Sigmoid colon (tissue), 7 donors: ENCODE measurements at regions of chr7 and their contacts with region 1.

Region 1: DNA sequence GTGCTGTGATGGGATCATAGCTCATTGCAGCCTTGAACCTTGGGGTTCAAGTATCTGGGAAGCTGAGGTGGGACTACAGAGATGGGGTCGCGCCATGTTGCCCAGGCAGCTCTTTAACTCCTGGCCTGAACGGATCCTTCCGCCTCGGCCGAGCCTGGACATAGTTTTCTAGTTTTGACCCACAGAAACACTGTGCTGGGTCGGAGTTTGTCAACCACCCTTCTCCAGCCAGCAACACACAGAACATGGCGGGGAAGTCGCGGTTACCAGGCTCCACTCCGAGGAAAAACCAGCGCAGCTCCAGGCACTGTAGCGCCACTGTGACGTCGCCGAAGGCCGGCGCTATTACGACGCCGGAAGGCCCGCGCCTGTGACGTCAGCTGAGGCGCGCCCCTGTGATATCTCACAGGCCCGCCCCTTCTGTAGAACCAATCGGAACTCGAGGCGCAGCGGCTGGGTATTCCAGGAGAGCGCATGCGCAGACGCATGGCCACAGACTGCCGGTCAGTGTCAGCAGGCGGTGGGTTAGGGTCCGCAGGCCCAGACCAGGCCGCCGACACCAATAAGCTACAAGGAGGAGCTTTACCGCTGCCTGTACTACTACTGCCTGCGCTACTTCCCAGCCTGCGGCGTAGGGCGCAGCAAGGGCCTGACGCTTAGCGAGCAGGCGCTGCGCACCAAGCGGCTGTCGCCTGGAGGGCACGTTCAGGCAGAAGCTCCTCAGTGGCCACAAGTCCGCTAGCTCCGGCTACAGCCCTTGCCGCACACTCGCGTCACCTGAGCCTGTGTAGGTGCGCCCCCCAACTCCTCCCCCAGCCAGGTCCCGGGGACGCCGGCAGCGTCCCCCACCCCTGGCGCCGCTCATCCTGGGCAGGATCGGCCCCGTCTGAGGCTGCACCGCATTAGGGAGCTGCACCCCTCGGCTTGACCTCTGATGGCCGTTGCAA is 135.2 kb upstream of the KCTD7 start:
- DNase-seq: peak; percentile 99
- H3K4me3 ChIP-seq: peak overlapping the region; percentile 62 to 78 (median 76)
- H3K27ac ChIP-seq: peak overlapping the region; percentile 82 to 96 (median 91)
- H3K4me1 ChIP-seq: peaks cover 0 to 17% (median 15%) of the 10 kb centered on the region in 4 donors
- H3K27me3 ChIP-seq: no peaks in the 10 kb centered on the region
- CTCF ChIP-seq: peak in 3 of 4 experiments; percentile 34 to 47 (median 40)
- EP300 ChIP-seq: peak in 1 of 4 donors; percentile 34
- POLR2A ChIP-seq: peak; percentile 92

Region 2: DNA sequence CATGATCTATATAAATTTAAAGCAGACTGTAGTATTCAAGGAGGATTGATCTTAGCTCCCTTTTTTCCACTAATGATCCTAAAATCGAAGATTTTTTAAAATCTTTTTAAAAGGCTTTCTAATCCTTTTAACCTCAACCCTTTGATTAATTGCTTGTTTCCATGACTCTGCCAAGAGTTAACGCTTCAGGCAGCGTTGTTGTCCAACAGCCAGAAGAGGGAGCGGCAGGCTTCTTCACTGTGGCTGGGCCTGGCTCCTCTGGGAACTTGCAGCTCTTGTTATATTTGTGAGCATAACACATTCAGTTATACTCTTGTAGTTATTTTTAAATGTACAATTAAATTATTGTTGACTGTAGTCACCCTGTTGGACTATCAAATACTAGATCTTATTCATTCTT is 352.6 kb before region 1 on chr7:
- intact Hi-C with region 1: loop called (anchors 5 kb)
- DNase-seq: peak; percentile 92
- H3K4me3 ChIP-seq: no peak overlapping the region
- H3K27ac ChIP-seq: peak overlapping the region; percentile 58 to 75 (median 60)
- H3K4me1 ChIP-seq: peaks cover 0 to 23% (median 14%) of the 10 kb centered on the region in 4 donors
- H3K27me3 ChIP-seq: no peaks in the 10 kb centered on the region
- CTCF ChIP-seq: peak in 2 of 4 experiments; percentile 50 to 54
- EP300 ChIP-seq: no peak
- POLR2A ChIP-seq: no peak

Region 3: DNA sequence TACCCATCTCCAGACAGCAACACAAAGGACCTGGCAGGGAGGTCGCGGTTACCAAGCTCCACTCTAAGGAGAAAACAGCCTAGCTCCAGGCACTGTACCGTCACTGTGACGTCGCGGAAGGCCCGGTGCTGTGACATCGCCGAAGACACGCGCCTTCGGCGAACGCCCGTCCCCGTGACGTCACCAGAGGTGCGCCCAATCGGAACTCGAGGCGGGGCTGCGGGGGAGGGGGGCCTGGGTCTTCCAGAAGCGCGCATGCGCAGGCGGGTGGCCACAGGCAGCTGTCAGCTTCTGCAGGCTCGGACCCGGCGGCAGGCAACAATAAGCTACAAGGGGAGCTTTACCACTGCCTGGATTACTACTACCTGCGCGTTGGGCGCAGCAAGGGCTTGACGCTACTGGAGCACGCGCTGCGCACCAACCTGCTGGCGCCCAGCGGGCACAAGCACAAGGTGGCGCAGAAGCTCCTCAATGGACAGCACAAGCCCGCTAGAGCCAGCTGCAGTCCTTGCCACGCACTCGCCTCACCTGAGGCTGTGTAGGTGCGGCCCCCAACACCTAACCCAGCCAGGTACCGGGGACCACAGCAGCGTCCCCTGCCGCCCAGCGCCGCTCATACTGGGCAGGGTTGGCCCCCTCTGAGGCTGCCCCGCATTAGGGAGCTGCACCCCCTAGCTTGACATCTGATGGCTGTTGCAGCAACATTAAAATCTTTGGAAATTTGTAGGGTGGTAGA is 80.0 kb before region 1 on chr7:
- intact Hi-C with region 1: loop called (anchors 2 kb)
- DNase-seq: peak; percentile 90
- H3K4me3 ChIP-seq: peak overlapping the region; percentile 33 to 56 (median 44)
- H3K27ac ChIP-seq: peak overlapping the region in 2 of 4 donors; percentile 20 to 44
- H3K4me1 ChIP-seq: peaks cover 0 to 13% (median 10%) of the 10 kb centered on the region in 4 donors
- H3K27me3 ChIP-seq: no peaks in the 10 kb centered on the region
- CTCF ChIP-seq: peak; percentile 6 to 31 (median 21)
- EP300 ChIP-seq: no peak
- POLR2A ChIP-seq: no peak

Region 4: DNA sequence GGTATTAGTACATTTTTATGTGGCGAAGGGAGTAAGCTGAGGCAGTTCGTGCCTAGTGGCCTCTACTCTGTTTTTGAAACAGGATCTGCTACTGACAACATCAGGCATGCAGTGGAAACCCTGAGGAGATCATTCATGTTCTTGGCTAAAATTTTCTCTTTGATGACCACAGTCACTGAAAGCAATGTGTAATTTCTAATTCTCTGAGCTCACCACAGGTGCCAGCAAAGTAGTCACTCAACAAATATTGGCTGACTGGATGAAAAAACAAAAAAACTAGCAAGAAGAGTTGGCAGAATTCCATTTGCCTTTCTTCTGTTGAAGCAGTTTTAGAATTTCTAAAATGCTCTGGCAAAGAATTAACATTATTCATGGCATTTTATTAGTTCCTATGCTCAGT is 41.3 kb before region 1 on chr7:
- intact Hi-C with region 1: no loop called
- DNase-seq: no peak
- H3K4me3 ChIP-seq: no peak overlapping the region
- H3K27ac ChIP-seq: no peak overlapping the region
- H3K4me1 ChIP-seq: no peaks in the 10 kb centered on the region
- H3K27me3 ChIP-seq: no peaks in the 10 kb centered on the region
- CTCF ChIP-seq: no peak
- EP300 ChIP-seq: no peak
- POLR2A ChIP-seq: no peak